ENCODE measurements at regions of chr20 and their contacts with region 1.

Region 1: DNA sequence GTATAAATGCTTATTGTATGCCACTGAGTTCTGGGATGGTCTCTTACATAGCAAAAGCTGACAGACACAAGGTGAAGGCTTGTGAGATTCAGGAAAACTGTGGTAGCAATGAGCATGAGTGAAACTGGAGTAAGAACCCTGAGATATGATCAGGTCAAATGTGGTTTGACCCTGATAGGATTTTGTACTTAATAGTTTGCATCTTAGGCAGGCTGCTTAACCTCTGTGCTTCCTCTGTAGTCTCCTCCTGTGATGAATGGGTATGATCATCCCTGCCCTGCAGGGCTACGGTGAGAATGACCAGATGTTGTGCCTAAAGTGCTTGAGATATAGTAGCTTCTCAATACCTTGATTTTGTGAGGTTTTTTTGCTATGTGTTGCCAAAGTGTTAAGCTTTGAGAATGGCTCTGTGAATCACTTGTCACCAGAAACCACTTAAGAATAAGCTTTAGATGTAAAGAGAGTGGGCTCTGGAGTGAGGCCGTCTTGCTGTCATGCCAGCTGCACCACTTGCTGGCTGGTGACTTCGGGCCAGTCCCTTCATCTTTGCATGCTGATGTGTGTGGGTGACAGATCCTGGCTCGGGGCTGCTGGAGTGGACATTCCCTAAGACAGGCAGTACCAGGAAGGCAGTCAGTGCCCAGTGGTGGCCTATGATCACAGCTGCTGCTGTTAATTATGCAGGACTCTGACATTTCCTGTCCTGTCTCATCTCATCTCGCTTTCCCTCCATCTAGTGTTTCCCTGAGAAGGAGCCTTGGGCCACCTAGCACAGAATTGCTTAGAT is 254.7 kb downstream of the NFATC2 start:
- DNase-seq: no peak
- H3K4me3 ChIP-seq: no peak overlapping the region
- H3K27ac ChIP-seq: no peak overlapping the region
- H3K4me1 ChIP-seq: no peaks in the 10 kb centered on the region
- H3K27me3 ChIP-seq: no peaks in the 10 kb centered on the region
- CTCF ChIP-seq: no peak
- POLR2A ChIP-seq: no peak

Region 2: DNA sequence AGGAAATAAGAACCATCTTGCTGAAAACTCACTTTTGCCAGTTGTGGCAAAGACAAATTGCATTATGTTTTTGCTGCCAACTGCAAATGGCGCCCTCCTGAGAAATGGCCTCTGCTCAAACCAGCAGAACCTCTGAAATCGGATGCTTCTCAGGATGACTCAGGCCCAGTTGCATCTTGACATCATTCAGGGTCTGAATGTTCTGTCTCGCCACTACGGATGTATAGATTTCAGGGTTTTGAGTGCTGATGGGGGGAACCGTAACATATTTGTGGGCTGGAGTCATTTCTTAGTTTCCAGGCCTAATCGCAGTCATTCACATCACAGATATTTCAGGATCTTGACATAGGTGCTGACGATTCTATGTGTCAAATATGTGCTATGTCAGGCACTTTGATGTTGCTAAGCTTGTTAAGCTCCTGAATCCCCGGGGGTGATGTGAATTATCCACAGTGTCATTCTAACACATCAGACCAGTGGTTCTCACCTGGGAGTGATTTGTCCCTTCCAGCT is 47.6 kb after region 1 on chr20:
- intact Hi-C with region 1: no loop called
- DNase-seq: no peak
- H3K4me3 ChIP-seq: no peak overlapping the region
- H3K27ac ChIP-seq: no peak overlapping the region
- H3K4me1 ChIP-seq: no peaks in the 10 kb centered on the region
- H3K27me3 ChIP-seq: no peaks in the 10 kb centered on the region
- CTCF ChIP-seq: no peak
- POLR2A ChIP-seq: no peak

Region 3: DNA sequence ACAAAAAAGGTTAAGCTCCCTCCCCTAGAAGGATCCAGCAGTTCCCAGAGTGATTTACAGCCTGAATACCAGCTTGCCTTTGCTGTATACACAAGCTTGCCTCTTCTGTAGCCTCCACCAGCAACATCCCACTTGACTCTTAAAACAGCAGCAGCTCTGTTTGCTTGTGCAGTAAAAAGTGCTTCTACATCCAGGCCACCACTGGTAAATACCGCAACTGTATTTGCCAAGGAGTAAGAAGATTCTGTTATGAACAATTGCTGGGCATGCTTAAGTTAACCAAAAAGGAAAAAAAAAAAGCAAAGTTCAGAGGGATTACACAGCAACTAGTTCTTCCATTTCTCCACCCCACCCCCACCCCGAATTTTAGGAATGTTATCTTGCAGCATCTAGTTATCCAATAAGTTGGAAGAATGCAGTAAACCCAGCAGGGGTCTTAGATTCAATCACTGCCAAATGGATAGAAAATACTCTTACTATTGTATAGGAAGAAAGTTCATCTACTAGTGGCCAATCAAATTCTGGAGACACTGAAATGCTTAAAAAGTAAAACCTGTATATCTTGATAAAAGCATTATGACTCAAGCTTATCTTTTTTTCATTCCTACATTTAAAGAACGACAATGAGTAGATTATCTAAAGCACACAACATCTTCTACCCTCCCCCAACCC is 509.7 kb after region 1 on chr20:
- intact Hi-C with region 1: loop called (anchors 5 kb)
- DNase-seq: no peak
- H3K4me3 ChIP-seq: no peak overlapping the region
- H3K27ac ChIP-seq: no peak overlapping the region
- H3K4me1 ChIP-seq: peaks cover 0 to 17% of the 10 kb centered on the region in 2 donors
- H3K27me3 ChIP-seq: peaks cover 0 to 16% of the 10 kb centered on the region in 2 donors
- CTCF ChIP-seq: no peak
- POLR2A ChIP-seq: no peak